SK-N-SH (cell line): ENCODE measurements at regions of chr17 and their contacts with region 1.

Region 1: DNA sequence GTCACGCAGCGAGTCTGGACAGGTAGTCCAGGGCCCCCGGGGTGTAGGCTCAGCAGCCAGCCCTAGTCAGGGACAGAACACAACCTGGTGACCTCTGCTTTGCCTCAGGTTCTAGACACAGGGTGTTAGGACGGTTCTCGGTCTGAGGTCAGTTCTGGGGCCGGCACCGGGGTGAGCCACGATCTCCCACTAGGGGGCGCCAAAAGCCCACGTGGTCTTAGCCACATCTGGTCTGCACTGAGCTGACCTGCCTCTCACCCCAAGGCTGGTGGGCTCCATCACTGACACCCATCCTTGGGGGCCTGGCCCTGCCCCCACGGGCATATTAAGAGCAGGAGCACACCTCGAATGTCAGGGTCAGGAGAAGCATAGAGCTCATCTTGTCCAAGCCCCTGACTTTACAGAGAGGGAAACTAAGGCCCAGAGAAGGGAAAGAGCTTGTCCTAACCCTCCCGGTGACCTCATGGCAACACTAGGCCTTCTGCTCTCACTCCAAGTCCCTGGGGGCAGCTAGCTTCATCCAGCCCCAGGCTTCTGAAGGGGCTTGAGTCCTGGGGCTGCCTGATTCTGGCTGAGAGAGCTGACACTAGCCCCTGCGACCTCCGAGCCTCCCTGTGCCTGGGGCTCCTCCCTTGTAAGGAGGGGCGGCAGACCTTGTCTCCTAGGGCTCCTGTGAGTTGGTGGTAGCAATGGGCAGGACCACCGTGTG is 9.0 kb downstream of the SLC5A10 start:
- DNase-seq: peak; percentile 93
- H3K4me3 ChIP-seq: peak overlapping the region in 1 of 2 experiments; percentile 11; a peak in 1 of 4 replicates
- H3K27ac ChIP-seq: no peak overlapping the region
- H3K4me1 ChIP-seq: peaks cover 6 to 11% of the 10 kb centered on the region in 2 experiments; a peak in 2 of 4 replicates
- H3K27me3 ChIP-seq: no peaks in the 10 kb centered on the region
- CTCF ChIP-seq: peak; percentile 94
- EP300 ChIP-seq: no peak
- RAD21 ChIP-seq: peak; percentile 93

Region 2: DNA sequence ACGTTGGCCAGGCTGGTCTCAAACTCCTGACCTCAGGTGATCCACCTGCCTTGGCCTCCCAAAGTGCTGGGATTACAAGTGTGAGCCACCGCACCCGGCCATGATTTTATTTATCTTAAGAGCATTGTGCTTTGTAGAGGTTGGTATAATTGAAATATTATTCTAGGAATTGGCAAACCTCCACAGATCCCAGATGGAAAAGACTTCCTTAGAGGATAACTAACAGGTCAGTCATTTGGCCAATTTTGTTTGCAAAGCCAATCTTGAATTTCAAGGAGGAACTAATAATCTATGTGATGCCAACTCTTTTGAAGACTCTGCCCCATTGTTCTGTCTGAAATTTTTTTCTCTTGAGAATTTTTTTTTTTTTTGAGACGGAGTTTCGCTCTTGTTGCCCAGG is 55.7 kb before region 1 on chr17:
- CTCF ChIA-PET with region 1: no interaction called
- POLR2A ChIA-PET with region 1: no interaction called
- DNase-seq: no peak
- H3K4me3 ChIP-seq: no peak overlapping the region
- H3K27ac ChIP-seq: no peak overlapping the region
- H3K4me1 ChIP-seq: no peaks in the 10 kb centered on the region
- H3K27me3 ChIP-seq: no peaks in the 10 kb centered on the region
- CTCF ChIP-seq: no peak
- EP300 ChIP-seq: no peak
- RAD21 ChIP-seq: no peak

Region 3: DNA sequence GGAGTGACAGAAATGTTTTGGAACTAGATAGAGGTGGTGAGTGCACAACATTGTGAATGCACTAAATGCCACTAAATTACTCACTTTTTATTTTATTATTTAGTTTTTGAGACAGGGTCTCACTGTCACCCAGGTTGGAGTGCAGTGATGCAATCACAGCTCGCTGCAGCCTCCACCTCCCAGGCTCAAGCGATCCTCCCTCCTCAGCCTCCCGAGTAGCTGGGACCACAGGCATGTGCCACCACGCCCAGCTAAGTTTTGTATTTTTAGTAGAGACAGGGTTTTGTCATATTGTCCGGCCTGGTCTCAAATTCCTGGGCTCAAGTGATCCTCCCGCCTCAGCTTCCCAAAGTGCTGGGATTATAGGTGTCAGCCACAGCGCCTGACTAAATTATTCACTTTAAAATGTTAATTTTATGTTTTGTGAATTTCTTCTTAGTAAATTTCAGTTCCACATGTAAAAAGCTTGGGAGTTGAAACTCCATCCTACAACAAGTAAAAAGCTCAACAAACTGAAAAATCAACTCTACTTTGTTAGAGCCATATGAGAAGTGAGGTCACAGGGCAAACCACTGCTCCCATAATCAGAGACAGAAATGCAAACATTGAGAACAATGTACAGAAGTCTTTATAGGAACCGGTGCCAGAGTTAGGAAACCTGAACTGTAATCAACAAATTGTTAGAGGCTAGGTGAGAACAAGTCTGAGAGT is 22.8 kb before region 1 on chr17:
- CTCF ChIA-PET with region 1: interaction called, 16 read pairs
- POLR2A ChIA-PET with region 1: no interaction called
- DNase-seq: no peak
- H3K4me3 ChIP-seq: no peak overlapping the region
- H3K27ac ChIP-seq: no peak overlapping the region
- H3K4me1 ChIP-seq: no peaks in the 10 kb centered on the region
- H3K27me3 ChIP-seq: no peaks in the 10 kb centered on the region
- CTCF ChIP-seq: no peak
- EP300 ChIP-seq: no peak
- RAD21 ChIP-seq: no peak

Region 4: DNA sequence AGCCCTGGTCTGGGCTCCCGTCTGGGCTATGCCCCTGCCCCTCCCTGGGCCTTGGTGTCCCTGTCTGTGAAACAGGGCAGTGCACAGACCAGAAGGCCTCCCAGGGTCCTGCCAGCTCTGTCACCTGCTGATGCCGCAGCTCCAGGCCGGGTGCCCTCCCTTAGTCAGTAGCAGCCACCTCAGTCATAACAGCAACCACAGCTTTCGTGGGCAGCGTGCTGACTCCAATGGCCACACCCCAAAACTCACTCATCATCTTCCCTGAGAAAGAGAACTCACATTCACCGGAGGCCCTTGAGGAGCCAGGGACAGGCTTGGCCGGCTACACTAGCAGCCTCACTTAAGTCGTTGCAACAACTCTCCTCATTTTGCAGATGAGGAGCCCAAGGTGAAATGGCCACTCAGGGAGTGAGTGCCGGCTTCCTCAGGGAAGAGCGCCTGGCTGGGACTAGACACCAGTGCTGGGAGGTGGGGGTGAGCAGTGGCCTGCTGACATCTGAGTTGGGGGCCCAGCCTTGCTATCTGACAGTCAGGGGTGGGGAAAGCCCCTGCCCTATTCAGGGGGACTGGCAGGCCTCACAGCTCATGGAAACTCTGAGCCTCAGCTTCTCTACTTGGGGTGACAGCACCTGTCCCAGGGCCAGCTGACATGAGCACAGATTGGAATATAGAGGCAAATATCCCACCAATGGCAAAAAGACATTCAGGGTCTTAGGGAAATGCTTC is 13.6 kb after region 1 on chr17:
- CTCF ChIA-PET with region 1: interaction called, 34 read pairs
- POLR2A ChIA-PET with region 1: no interaction called
- DNase-seq: no peak
- H3K4me3 ChIP-seq: no peak overlapping the region
- H3K27ac ChIP-seq: no peak overlapping the region
- H3K4me1 ChIP-seq: no peaks in the 10 kb centered on the region
- H3K27me3 ChIP-seq: no peaks in the 10 kb centered on the region
- CTCF ChIP-seq: no peak
- EP300 ChIP-seq: no peak
- RAD21 ChIP-seq: no peak

Region 5: GRCh38 chr17:18990331-18990730 is 29.4 kb after region 1 on chr17:
- CTCF ChIA-PET with region 1: interaction called, 11 read pairs
- POLR2A ChIA-PET with region 1: no interaction called
- DNase-seq: no peak
- H3K4me3 ChIP-seq: no peak overlapping the region
- H3K27ac ChIP-seq: no peak overlapping the region; a peak in 1 of 4 replicates
- H3K4me1 ChIP-seq: no peaks in the 10 kb centered on the region; a peak in 1 of 4 replicates
- H3K27me3 ChIP-seq: no peaks in the 10 kb centered on the region
- CTCF ChIP-seq: no peak
- EP300 ChIP-seq: no peak
- RAD21 ChIP-seq: no peak

Region 6: GRCh38 chr17:19024101-19025078 is 63.4 kb after region 1 on chr17:
- CTCF ChIA-PET with region 1: interaction called, 26 read pairs
- POLR2A ChIA-PET with region 1: interaction called, 3 read pairs
- DNase-seq: no peak
- H3K4me3 ChIP-seq: no peak overlapping the region
- H3K27ac ChIP-seq: no peak overlapping the region
- H3K4me1 ChIP-seq: peaks cover 0 to 14% of the 10 kb centered on the region in 2 experiments; a peak in 1 of 4 replicates
- H3K27me3 ChIP-seq: no peaks in the 10 kb centered on the region
- CTCF ChIP-seq: no peak
- EP300 ChIP-seq: no peak
- RAD21 ChIP-seq: no peak